Dendritic cell treated with granulocyte-macrophage colony-stimulating factor and Interleukin-4, amounts not matched to agents 40 ng/mL and 50 ng/mL, for 4 days (primary cell): ENCODE measurements at regions of chr17 and their contacts with region 1.

Region 1: GRCh38 chr17:73192894-73193701 is at the start of gene COG1:
- H3K4me3 Mint-ChIP-seq: peak within 1 kb of the TSS; percentile 99
- H3K27ac Mint-ChIP-seq: peak within 1 kb of the TSS; percentile 92
- H3K4me1 Mint-ChIP-seq: peaks cover 22% of the 10 kb centered on the region
- H3K27me3 Mint-ChIP-seq: no peaks in the 10 kb centered on the region

Region 2: GRCh38 chr17:72560303-72561247 is 632.5 kb before region 1 on chr17:
- intact Hi-C with region 1: loop called (anchors 10 kb)
- H3K4me3 Mint-ChIP-seq: no peak overlapping the region
- H3K27ac Mint-ChIP-seq: no peak overlapping the region
- H3K4me1 Mint-ChIP-seq: no peaks in the 10 kb centered on the region
- H3K27me3 Mint-ChIP-seq: no peaks in the 10 kb centered on the region